IMR-90 (cell line): ENCODE measurements at regions of chr20 and their contacts with region 1.

Region 1: DNA sequence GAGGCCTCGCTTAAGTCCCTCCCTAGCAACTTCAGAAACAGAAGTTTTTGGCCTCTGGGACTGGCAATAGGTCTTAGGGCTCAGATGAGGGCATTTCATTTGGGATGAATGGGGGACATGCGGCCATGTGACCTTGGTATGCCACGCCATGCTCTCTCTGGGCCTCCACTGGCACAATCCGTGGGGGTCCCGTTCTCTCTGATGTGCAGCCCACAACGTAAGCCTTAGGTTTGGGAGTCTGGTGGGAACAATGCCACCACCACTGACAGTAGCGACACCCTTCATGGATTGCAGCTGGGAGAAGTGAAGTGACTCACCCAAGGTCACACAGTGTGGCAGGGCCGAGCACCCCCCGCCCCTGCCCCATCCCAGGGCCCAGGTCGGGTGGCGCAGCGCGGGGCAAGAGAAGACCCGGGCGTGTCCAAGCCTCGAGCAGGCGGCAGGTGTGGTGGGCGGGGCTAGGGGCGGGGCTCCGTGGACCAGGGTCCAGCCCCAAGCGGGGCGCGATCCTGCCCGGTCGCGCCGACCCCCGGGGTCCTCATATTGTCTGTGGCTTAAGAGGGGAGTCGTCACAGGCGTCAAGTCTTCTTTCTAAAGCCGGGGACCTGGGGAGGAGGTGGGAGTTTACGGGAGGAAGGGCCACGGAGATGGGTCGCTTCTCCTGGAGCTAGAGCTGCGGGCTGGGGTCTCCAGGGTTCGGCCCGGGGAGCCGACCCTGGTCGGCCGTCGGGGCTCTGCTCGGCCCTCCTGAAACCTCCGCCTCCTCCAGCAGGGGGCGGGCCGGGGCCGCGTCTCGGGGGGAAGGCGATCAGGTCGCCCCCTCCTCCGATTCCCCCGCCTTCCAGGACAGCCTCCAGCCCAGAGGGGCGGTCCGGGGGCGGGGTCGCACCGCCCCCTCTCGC is 698 bp upstream of the CEBPB start:
- DNase-seq: peak; percentile 87
- ATAC-seq: peak; percentile 77
- H3K4me3 ChIP-seq: peak overlapping the region; percentile 95
- H3K27ac ChIP-seq: no peak overlapping the region; the same call in 1 of the 2 replicates
- H3K4me1 ChIP-seq: peaks cover 16% of the 10 kb centered on the region
- H3K27me3 ChIP-seq: no peaks in the 10 kb centered on the region
- CTCF ChIP-seq: peak; percentile 81
- POLR2A ChIP-seq: no peak
- RAD21 ChIP-seq: peak; percentile 81

Region 2: DNA sequence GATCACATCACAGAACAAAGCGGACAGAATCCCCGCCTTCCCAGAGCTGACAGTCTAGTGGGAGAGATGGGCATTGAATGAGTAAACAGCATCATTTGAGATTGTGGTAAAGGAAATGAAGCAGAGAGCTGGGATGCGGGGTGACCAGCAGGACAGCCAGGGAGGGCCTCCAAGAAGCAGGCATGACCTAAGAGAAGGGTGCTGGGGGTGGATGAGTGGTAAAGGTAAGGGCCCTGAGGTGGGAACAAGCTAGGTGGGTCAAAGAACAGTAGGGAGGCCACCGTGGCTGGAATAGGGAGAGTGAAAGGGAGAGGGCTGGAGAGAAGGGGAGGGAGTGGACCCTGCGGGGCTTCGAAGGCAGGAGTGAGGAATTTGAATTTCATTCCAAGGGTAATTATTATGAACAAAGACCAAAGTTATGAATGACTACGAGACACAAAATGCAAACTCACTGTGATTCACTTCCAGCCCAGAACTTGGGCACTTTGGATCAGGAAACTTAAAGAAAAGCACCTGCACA is 62.1 kb after region 1 on chr20:
- CTCF ChIA-PET with region 1: no interaction called
- POLR2A ChIA-PET with region 1: no interaction called
- dilution Hi-C with region 1: no loop called
- in situ Hi-C with region 1: no loop called
- intact Hi-C with region 1: loop called (anchors 5 kb)
- DNase-seq: peak; percentile 87
- ATAC-seq: peak; percentile 72
- H3K4me3 ChIP-seq: no peak overlapping the region
- H3K27ac ChIP-seq: peak overlapping the region; percentile 85
- H3K4me1 ChIP-seq: peaks cover 17% of the 10 kb centered on the region
- H3K27me3 ChIP-seq: no peaks in the 10 kb centered on the region
- CTCF ChIP-seq: no peak
- POLR2A ChIP-seq: peak; percentile 51; the same call in 1 of the 2 replicates
- RAD21 ChIP-seq: no peak

Region 3: DNA sequence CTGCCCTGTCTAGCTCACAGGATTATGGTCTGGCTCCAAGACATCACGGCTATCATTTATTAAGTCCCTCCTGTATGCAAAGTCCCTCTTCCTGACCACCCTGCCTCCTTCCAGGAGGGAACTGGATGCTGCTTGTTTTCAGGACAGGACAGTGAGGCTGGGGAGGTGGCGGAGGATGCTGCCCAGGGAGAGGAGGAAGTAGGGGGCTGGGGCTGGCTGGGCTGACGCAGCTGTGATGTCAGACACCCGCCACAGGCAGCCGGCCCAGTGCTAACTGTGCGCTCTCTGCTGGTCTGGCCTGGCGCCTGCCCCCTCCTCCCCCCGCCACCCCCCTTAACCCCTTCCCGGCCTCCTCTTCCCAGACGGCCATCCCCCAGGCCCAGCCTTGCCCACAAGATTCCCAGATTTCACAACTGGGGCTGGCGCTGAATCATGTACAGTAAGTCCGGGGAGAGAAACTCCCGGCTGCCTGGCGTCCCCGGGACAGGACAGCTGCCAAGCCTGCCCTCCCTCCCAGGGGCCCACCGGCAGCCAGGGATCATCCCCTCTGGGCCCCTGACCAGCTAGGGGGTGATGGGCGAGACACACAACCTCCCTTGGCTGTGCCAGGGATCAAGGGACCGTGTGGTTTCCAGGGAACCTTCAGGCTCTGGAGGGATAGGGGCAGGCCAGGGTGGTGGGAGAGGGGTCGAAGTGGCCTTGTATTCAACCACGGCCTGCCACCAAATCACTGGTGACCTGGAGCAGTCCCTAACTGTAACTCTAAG is 118.8 kb after region 1 on chr20:
- CTCF ChIA-PET with region 1: interaction called, 3 read pairs
- POLR2A ChIA-PET with region 1: no interaction called
- dilution Hi-C with region 1: no loop called
- in situ Hi-C with region 1: loop called (anchors 5 kb)
- intact Hi-C with region 1: loop called (anchors 1 kb)
- DNase-seq: peak; percentile 100
- ATAC-seq: peak; percentile 59
- H3K4me3 ChIP-seq: peak overlapping the region; percentile 5; the same call in 1 of the 2 replicates
- H3K27ac ChIP-seq: peak overlapping the region; percentile 98
- H3K4me1 ChIP-seq: peaks cover 61% of the 10 kb centered on the region
- H3K27me3 ChIP-seq: no peaks in the 10 kb centered on the region
- CTCF ChIP-seq: peak; percentile 26; the same call in 1 of the 2 replicates
- POLR2A ChIP-seq: peak; percentile 74; the same call in 1 of the 2 replicates
- RAD21 ChIP-seq: peak; percentile 40

Region 4: DNA sequence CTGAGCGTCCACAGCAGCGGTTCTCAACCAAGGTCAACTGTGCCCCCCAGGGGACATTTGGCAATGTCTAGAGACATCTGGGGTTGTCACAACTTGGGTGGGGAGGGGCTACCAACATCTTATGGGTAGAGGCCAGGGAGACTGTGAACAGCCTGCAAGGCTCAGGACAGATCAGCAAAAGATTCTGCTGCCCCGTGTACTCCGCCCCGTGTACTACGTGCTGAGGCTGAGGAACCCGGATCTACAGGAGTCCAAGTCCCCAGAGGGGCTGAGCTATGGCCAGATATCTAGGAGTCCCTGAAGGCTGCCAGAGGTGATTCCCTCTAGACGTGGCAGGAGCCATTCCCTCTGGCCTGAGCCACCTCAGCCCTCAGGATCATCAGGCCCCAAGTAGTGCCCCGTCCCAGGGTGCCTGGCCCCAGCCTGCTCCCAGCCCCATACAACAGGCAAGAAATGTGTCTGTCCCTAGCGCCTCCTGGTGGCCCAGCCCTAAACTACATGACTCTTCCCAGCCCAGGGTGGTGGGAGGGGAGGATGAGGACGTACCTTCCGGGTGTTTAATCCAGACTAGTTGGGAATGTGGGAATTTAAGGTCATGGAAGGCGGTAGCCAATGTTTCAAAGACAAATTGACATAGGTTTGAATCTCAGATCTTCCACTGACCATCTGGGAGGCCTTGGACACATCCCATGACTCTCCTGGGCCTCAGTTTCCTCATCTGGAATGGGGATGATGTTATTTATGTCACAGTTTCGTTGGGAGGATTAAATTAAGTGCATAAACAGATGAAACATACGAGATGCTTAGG is 270.7 kb after region 1 on chr20:
- CTCF ChIA-PET with region 1: interaction called, 12 read pairs
- POLR2A ChIA-PET with region 1: no interaction called
- dilution Hi-C with region 1: no loop called
- in situ Hi-C with region 1: loop called (anchors 5 kb)
- intact Hi-C with region 1: loop called (anchors 1 kb)
- DNase-seq: peak; percentile 75
- ATAC-seq: peak; percentile 91
- H3K4me3 ChIP-seq: no peak overlapping the region
- H3K27ac ChIP-seq: peak overlapping the region; percentile 4; the same call in 1 of the 2 replicates
- H3K4me1 ChIP-seq: peaks cover 13% of the 10 kb centered on the region
- H3K27me3 ChIP-seq: no peaks in the 10 kb centered on the region
- CTCF ChIP-seq: peak; percentile 91
- POLR2A ChIP-seq: peak; percentile 41; the same call in 1 of the 2 replicates
- RAD21 ChIP-seq: peak; percentile 96

Region 5: GRCh38 chr20:50744143-50744792 is 554.3 kb after region 1 on chr20:
- CTCF ChIA-PET with region 1: no interaction called
- POLR2A ChIA-PET with region 1: no interaction called
- dilution Hi-C with region 1: no loop called
- in situ Hi-C with region 1: loop called (anchors 10 kb)
- intact Hi-C with region 1: loop called (anchors 5 kb)
- DNase-seq: peak; percentile 88
- ATAC-seq: peak; percentile 92
- H3K4me3 ChIP-seq: no peak overlapping the region
- H3K27ac ChIP-seq: peak overlapping the region; percentile 92
- H3K4me1 ChIP-seq: peaks cover 17% of the 10 kb centered on the region
- H3K27me3 ChIP-seq: no peaks in the 10 kb centered on the region
- CTCF ChIP-seq: peak; percentile 75
- POLR2A ChIP-seq: no peak
- RAD21 ChIP-seq: peak; percentile 85